ENCODE measurements at regions of chr10 and their contacts with region 1.

Region 1: DNA sequence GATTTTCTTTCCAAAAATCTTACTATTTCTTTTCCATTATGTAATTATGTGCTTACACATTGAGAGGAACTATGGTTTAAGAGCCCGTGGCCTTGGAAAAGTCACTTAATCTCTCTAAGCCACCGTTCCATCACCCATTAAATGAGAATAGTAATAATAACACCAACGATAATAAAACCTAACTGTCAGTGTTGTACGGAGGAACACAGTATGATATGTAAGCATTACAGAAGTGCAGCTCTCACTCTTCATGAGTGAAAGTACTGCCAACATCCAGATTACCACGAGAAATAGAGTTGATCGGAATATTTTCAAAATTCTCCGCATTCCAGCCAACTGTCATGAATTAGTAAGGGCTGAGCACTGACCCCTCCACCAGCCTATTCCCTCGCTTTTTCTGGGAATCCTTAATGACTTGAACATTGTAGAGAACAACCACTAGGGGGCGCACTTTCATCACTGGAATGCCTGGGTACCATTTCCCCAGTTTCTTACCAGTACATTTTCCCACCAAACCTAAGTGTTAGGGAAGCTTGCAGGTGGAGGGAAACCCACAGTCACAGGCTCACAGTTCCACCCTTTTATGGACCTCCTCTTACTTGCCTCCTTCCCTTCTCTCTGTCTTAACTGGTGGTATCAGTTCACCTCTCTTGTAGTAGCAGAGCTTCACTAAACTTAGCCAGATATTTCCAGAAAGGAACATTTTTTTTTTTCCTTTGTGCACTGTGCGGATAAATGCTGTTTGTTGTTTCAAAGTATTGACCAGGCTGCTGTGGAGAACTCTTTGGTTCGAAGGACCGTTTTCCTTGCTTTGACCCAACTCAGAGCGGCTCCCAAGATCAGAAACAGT is 27.8 kb downstream of the NKX2-3 start:
- DNase-seq: no peak
- H3K4me3 ChIP-seq: no peak overlapping the region
- H3K27ac ChIP-seq: no peak overlapping the region
- H3K27me3 ChIP-seq: peaks cover 11% of the 10 kb centered on the region
- CTCF ChIP-seq: peak; percentile 69

Region 2: DNA sequence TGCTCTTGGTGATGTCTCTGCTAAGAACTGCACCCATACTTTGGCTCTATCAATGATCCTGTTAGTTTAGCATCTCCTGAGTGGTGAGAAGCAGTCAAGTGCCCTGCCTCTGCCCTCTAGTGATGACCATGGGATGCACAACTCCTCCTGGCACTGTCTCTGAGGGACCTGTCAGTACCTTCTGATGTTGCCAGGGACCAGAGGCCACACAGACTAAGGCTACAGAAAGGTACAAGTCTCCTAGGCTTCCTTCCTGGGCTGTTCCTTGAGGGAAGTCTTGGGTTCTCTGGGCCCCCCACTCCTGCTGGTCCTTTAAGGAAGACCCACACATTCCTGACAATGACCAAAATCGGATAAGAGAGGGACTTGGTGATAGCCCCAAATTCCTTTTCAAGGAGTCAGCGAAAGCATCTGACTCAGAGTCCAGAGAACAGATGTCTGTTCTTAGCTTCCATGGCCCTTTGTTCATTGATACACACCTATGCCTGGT is 12.4 kb before region 1 on chr10:
- CTCF ChIA-PET with region 1: interaction called, 11 read pairs
- POLR2A ChIA-PET with region 1: no interaction called
- DNase-seq: no peak
- H3K4me3 ChIP-seq: no peak overlapping the region
- H3K27ac ChIP-seq: no peak overlapping the region
- H3K27me3 ChIP-seq: peaks cover 25% of the 10 kb centered on the region
- CTCF ChIP-seq: peak; percentile 37

Region 3: GRCh38 chr10:99579616-99580370 is 19.3 kb after region 1 on chr10:
- CTCF ChIA-PET with region 1: interaction called, 14 read pairs
- POLR2A ChIA-PET with region 1: no interaction called
- DNase-seq: no peak
- H3K4me3 ChIP-seq: no peak overlapping the region
- H3K27ac ChIP-seq: no peak overlapping the region
- H3K27me3 ChIP-seq: peaks cover 16% of the 10 kb centered on the region
- CTCF ChIP-seq: no peak

Region 4: DNA sequence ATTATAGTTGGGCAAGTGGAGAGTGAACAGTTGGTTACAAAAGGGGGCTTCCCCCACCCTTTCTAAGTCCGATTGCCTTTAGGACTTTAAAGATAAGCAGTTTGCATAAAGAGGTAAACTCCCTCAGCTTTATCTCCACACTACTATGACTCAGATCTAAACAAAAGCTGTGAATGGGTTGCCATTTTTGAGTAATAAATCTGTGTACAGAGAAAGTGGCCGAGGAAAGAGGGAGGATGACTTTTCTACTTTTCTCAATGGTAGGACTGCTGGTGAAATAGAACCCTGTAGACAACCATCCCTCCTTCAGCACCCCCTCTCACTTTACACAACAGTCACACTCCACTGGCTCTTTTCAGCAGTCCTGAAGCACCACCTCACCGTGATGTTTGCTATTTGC is 378.1 kb after region 1 on chr10:
- CTCF ChIA-PET with region 1: no interaction called
- POLR2A ChIA-PET with region 1: no interaction called
- DNase-seq: no peak
- H3K4me3 ChIP-seq: no peak overlapping the region
- H3K27ac ChIP-seq: no peak overlapping the region
- H3K27me3 ChIP-seq: no peaks in the 10 kb centered on the region
- CTCF ChIP-seq: no peak